Psoas muscle (tissue), 8 donors: ENCODE measurements at regions of chr10 and their contacts with region 1.

Region 1: GRCh38 chr10:66637273-66638036 is 288.4 kb upstream of the LRRTM3 start:
- DNase-seq: peak; percentile 14 to 50
- ATAC-seq: peak; percentile 84 to 93 (median 88)
- H3K4me3 ChIP-seq: no peak overlapping the region
- H3K27ac ChIP-seq: no peak overlapping the region
- H3K4me1 ChIP-seq: no peaks in the 10 kb centered on the region
- H3K27me3 ChIP-seq: no peaks in the 10 kb centered on the region
- CTCF ChIP-seq: no peak

Region 2: GRCh38 chr10:66836057-66836456 is 198.6 kb after region 1 on chr10:
- intact Hi-C with region 1: loop called in 1 of 2 experiments (anchors 10 kb)
- DNase-seq: no peak
- ATAC-seq: peak in 3 of 4 donors; percentile 28 to 54 (median 53)
- H3K4me3 ChIP-seq: no peak overlapping the region
- H3K27ac ChIP-seq: no peak overlapping the region
- H3K4me1 ChIP-seq: peaks cover 13% of the 10 kb centered on the region
- H3K27me3 ChIP-seq: no peaks in the 10 kb centered on the region
- CTCF ChIP-seq: no peak